PC-9 (cell line): ENCODE measurements at regions of chr5 and their contacts with region 1.

Region 1: DNA sequence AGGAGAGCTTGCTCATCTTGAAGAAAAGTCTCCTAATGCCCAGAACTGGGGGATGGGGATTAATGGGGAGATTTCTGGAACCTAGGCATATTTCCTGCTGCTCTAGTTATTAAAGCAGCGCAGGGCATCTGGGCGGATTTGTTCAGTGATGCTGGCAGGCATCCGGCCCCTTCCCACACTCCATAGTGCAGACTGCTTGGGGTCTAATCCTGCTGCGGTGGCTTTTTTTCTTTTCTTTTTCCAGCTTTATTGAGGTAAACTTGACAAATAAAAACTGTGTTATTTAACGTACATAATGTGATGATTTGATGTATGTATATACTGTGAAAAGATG is 30.7 kb downstream of the PPARGC1B start:
- DNase-seq: no peak
- H3K4me3 ChIP-seq: no peak overlapping the region
- H3K27ac ChIP-seq: peak overlapping the region; percentile 56
- H3K4me1 ChIP-seq: peaks cover 23% of the 10 kb centered on the region
- H3K27me3 ChIP-seq: no peaks in the 10 kb centered on the region
- CTCF ChIP-seq: no peak

Region 2: DNA sequence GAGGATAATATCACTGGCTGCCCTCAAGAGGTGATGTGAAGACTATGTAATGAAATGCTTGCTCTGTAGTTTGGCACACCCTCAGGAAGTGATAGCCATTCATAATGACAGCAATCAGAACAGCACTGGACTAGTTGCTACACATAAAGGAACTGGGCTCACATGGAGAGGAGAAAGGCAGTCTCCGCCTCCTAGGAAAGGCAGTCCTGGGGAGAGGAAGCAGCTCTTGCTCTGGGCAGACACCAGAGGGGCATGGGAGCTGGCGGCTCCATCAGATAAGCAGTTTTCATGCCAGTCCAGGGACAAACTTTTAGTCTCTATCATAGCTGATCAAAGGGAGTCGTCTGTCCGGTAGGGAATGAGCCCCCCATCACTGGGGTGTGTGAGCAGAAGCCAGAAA is 132.6 kb before region 1 on chr5:
- CTCF ChIA-PET with region 1: no interaction called
- POLR2A ChIA-PET with region 1: no interaction called
- intact Hi-C with region 1: no loop called
- DNase-seq: no peak
- H3K4me3 ChIP-seq: no peak overlapping the region
- H3K27ac ChIP-seq: no peak overlapping the region
- H3K4me1 ChIP-seq: peaks cover 11% of the 10 kb centered on the region
- H3K27me3 ChIP-seq: no peaks in the 10 kb centered on the region
- CTCF ChIP-seq: no peak

Region 3: DNA sequence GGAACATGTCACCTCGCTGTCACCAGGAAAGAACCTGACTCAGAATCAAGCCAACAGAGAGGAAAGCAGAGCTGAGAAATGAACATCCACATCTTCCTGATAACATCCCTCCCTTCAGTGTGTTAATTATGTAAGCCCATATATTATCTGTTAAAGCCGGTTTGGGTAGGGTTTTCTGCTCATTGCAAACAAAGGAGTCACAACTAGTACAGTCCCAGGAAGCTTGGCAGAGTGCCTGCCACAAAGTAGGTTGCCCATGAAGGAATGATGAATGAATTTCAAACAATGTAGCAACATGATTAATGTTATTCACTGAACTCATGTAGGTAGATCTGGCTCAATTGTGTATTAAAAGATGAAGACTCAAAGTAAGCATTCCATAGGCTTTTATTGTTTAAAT is 41.1 kb before region 1 on chr5:
- CTCF ChIA-PET with region 1: interaction called, 11 read pairs
- POLR2A ChIA-PET with region 1: interaction called, 3 read pairs
- intact Hi-C with region 1: no loop called
- DNase-seq: peak; percentile 78 to 88
- H3K4me3 ChIP-seq: no peak overlapping the region
- H3K27ac ChIP-seq: no peak overlapping the region
- H3K4me1 ChIP-seq: peaks cover 10% of the 10 kb centered on the region
- H3K27me3 ChIP-seq: peaks cover 4% of the 10 kb centered on the region; the same call in 1 of the 2 replicates
- CTCF ChIP-seq: no peak